HEK293 (cell line): ENCODE measurements at regions of chr11 and their contacts with region 1.

Region 1: DNA sequence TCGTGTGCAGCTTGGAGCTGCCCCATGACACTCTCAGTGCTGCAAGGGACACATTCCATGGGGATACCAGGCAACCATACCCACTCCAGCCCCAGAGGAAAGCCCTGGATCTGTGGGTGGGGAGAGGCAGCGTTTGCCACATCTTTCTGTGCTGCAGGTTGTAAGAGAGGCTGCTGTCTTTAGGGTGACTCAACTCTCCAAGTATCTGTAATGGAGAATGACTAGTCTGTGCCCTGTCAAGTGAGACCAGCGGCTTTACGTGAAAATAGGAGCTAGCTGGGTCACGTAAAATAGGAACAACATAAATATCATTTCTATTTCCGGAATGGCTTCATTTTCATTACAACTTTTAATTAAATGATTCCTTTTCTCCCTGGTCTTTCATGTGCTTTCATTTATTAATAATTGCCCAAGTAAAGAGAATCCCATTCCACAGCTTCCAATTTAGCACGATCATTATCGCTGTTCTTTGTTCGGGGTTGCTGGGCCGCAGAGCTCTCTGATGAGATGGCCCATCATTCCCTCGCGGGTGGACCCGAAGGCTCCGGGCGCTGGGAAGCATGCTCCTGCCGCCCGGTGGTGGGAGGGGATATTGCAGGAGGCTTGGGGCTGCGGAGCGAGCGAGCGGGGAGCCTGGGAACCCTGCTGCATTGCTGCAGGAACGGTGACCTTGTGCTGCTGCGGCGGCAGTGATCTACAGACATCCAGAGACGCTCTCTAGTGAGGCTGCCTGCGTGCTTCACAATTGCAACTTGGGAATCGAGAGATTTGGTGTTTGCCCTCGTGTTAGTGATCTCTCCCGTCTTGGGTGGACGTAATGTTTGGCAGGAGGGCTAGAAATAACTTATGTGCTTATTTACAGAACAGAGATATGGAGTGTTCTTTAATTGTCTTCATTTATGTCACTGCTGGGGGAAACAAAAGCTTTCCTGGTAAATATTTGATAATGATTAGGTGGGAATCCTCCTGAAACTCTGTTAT is 10.6 kb downstream of the SLC6A5 start:
- H3K4me3 ChIP-seq: no peak overlapping the region
- H3K27ac ChIP-seq: no peak overlapping the region
- H3K4me1 ChIP-seq: no peaks in the 10 kb centered on the region
- CTCF ChIP-seq: peak; percentile 52

Region 2: DNA sequence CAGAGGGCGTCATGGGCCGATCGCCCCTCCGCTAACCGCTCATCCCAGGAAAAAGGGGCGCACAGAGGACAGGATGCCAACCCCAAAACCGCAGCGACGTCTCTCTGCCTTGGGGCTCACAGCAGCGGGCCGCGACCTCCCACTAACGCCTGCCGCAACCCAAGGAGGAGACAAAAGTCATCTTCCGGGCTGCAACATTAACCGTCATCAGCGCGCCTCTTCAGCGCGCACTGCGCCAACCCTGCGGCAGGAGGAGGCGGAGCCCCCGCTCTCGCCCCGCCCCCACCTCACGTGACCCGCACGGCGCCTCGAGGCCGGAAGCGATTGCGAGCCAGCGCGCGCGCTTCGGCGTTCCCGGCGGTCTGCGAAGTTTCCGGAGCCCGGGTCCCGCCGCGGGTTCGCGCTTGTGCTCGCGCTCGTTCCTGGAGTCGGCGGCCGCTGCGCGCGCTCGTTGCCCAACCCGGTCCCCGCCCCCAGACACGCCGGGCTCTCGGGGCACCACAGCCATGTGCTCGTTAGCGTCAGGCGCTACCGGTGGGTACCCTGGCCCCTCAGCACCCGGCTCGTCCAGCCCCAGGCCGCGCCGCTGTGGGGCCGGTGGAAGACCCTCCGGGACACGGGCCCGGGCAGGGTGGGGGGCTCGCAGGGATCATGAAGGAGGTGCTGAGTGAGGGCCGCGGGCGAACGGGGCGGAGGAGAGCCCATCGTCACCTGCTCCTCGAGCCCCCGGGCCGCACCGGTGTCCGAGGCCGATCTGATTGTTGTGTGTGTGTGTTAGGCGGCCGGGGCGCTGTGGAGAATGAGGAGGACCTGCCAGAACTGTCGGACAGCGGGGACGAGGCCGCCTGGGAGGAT is 222.5 kb before region 1 on chr11 and contains the start of gene PRMT3:
- CTCF ChIA-PET with region 1: interaction called, 13 read pairs
- POLR2A ChIA-PET with region 1: no interaction called
- H3K4me3 ChIP-seq: peak within 1 kb of the TSS; percentile 96
- H3K27ac ChIP-seq: peak within 1 kb of the TSS; percentile 54
- H3K4me1 ChIP-seq: no peaks in the 10 kb centered on the region
- CTCF ChIP-seq: peak; percentile 97

Region 3: DNA sequence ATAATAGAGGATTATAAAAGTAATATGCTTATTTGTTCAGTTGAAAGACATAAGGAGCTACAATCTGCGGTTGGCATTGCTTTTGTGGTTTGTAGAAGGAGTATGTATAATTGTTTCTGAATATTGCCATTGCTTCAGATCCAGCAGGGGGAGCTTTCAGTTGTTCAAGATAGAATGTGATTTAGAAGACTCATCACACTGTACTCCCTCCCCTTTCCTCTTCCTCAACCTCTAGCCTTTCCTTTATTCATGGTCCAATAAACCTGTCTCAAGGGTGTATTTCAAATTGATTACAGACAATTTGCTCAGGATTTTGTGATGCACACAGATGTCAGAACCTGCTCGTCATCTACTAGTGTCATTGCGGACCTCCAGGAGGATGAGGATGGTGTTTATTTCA is 212.7 kb before region 1 on chr11:
- CTCF ChIA-PET with region 1: interaction called, 40 read pairs
- POLR2A ChIA-PET with region 1: no interaction called
- H3K4me3 ChIP-seq: no peak overlapping the region
- H3K27ac ChIP-seq: no peak overlapping the region
- H3K4me1 ChIP-seq: no peaks in the 10 kb centered on the region
- CTCF ChIP-seq: no peak

Region 4: GRCh38 chr11:20443596-20443995 is 166.4 kb before region 1 on chr11:
- CTCF ChIA-PET with region 1: interaction called, 10 read pairs
- POLR2A ChIA-PET with region 1: no interaction called
- H3K4me3 ChIP-seq: no peak overlapping the region
- H3K27ac ChIP-seq: no peak overlapping the region
- H3K4me1 ChIP-seq: no peaks in the 10 kb centered on the region
- CTCF ChIP-seq: no peak

Region 5: GRCh38 chr11:20973940-20974559 is 364.0 kb after region 1 on chr11:
- CTCF ChIA-PET with region 1: no interaction called
- POLR2A ChIA-PET with region 1: no interaction called
- H3K4me3 ChIP-seq: no peak overlapping the region
- H3K27ac ChIP-seq: no peak overlapping the region
- H3K4me1 ChIP-seq: no peaks in the 10 kb centered on the region
- CTCF ChIP-seq: no peak